HepG2 (cell line): ENCODE measurements at regions of chr22 and their contacts with region 1.

Region 1: DNA sequence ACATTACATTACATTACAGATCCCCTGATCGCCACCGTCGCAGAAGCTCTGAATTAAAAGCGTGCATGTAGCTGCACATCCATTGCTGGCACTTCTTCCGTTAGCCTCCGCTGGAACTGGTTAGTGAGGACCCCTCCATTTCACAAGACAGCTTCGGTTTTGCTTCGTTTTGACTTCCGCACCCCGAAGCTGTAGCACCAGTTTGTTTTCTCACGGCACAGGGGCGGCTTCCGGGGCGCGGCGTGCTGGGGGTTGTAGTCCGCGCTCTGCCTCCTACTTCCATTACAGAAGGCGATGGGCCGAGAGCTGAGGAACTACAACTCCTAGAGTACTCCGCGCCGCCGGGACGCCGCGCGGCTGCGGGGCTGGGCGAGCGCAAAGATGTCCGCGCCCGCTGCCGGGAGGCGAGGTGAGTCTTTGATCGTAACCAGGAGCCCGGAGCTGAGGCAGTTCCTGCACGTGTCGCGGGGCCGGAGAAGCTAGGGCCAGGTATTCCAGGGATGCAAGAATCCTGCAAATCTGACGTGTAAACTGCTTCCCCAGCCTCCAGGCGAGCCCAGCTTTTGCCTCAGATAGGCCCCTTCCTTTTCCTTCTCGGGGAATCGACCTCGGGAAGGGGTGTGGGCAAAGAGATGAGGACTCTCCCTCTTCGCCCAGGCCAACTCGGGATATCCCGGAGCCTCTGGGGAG is at the start of gene PEX26:
- DNase-seq: peak; percentile 92
- ATAC-seq: peak; percentile 98
- H3K4me3 ChIP-seq: peak within 1 kb of the TSS; percentile 78 to 94 (median 80)
- H3K27ac ChIP-seq: peak within 1 kb of the TSS; percentile 72
- H3K4me1 ChIP-seq: peaks cover 32% of the 10 kb centered on the region
- H3K27me3 ChIP-seq: no peaks in the 10 kb centered on the region; a peak in 1 of 5 replicates
- CTCF ChIP-seq: no peak
- EP300 ChIP-seq: no peak
- POLR2A ChIP-seq: peak; percentile 62 to 73
- RAD21 ChIP-seq: no peak
- total RNA-seq, gene PEX26: 25.1 and 30.6 TPM in 2 replicates

Region 2: GRCh38 chr22:17830043-17830961 is 247.5 kb before region 1 on chr22:
- CTCF ChIA-PET with region 1: interaction called, 43 read pairs
- POLR2A ChIA-PET with region 1: no interaction called
- in situ Hi-C with region 1: loop called (anchors 5 kb)
- intact Hi-C with region 1: loop called (anchors 1 kb)
- DNase-seq: peak; percentile 63
- ATAC-seq: peak; percentile 93
- H3K4me3 ChIP-seq: no peak overlapping the region
- H3K27ac ChIP-seq: no peak overlapping the region
- H3K4me1 ChIP-seq: no peaks in the 10 kb centered on the region
- H3K27me3 ChIP-seq: no peaks in the 10 kb centered on the region
- CTCF ChIP-seq: peak; percentile 98
- EP300 ChIP-seq: no peak
- POLR2A ChIP-seq: no peak
- RAD21 ChIP-seq: peak; percentile 94

Region 3: DNA sequence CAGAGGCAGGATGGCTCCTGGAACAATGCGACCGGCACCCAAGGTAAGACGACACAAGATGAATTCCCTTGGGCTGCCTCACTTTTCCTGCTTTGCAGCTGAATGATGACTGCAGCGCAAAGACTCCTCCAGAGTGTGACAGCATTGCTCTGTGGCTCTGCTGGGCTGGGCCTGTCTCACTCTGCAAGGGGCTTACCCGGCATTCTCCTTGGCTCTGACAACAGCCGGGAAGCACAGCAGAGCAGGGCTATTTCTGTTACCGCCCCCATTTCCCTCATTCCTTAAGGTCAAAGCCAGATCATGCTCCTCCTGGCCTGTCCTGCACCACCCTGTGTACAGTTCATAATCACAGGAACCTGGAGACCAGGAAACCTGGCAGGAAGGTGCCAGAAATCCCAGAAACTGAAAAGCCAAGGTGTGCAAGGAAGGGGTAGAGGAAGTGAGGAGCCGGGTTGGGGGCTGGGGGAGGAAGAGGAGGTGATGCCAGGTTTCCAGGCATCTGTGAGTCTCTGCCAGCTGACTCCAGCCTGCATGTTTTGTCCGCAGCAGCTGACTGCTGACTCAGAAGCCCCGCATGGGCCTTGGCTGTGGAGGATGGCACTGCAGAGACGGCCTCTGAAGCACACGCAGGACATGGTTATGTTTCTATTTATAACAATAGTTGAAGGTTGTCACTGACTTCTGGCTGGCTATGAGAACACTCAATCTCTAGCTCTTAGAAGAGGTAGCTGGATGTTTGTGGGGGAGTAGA is 167.0 kb before region 1 on chr22:
- CTCF ChIA-PET with region 1: no interaction called
- POLR2A ChIA-PET with region 1: no interaction called
- in situ Hi-C with region 1: loop called (anchors 10 kb)
- intact Hi-C with region 1: no loop called
- DNase-seq: no peak
- ATAC-seq: peak; percentile 72
- H3K4me3 ChIP-seq: no peak overlapping the region
- H3K27ac ChIP-seq: no peak overlapping the region
- H3K4me1 ChIP-seq: peaks cover 7% of the 10 kb centered on the region; the same call in 1 of the 2 replicates
- H3K27me3 ChIP-seq: no peaks in the 10 kb centered on the region
- CTCF ChIP-seq: peak; percentile 61
- EP300 ChIP-seq: no peak
- POLR2A ChIP-seq: no peak
- RAD21 ChIP-seq: no peak

Region 4: GRCh38 chr22:18024276-18024947 is 53.4 kb before region 1 on chr22 and contains the start of gene MICAL3:
- CTCF ChIA-PET with region 1: interaction called, 3 read pairs
- POLR2A ChIA-PET with region 1: interaction called, 4 read pairs
- in situ Hi-C with region 1: no loop called
- intact Hi-C with region 1: loop called (anchors 1 kb)
- DNase-seq: no peak
- ATAC-seq: peak; percentile 92
- H3K4me3 ChIP-seq: peak within 1 kb of the TSS; percentile 58 to 79 (median 64)
- H3K27ac ChIP-seq: no peak within 1 kb of the TSS
- H3K4me1 ChIP-seq: peaks cover 25% of the 10 kb centered on the region
- H3K27me3 ChIP-seq: peaks cover 0 to 20% of the 10 kb centered on the region in 2 experiments; a peak in 4 of 5 replicates
- CTCF ChIP-seq: peak; percentile 61
- EP300 ChIP-seq: no peak
- POLR2A ChIP-seq: no peak
- RAD21 ChIP-seq: peak; percentile 84
- total RNA-seq, gene MICAL3: 9.5 and 12.5 TPM in 2 replicates

Region 5: GRCh38 chr22:18044548-18045271 is 33.1 kb before region 1 on chr22:
- CTCF ChIA-PET with region 1: no interaction called
- POLR2A ChIA-PET with region 1: interaction called, 13 read pairs
- in situ Hi-C with region 1: no loop called
- intact Hi-C with region 1: no loop called
- DNase-seq: peak; percentile 94
- ATAC-seq: peak; percentile 97
- H3K4me3 ChIP-seq: peak overlapping the region; percentile 19 to 60 (median 20)
- H3K27ac ChIP-seq: peak overlapping the region; percentile 32
- H3K4me1 ChIP-seq: peaks cover 47% of the 10 kb centered on the region
- H3K27me3 ChIP-seq: no peaks in the 10 kb centered on the region
- CTCF ChIP-seq: peak; percentile 16; the same call in 1 of the 2 replicates
- EP300 ChIP-seq: peak; percentile 58 to 71; a peak in 3 of 4 replicates
- POLR2A ChIP-seq: no peak
- RAD21 ChIP-seq: no peak

Region 6: DNA sequence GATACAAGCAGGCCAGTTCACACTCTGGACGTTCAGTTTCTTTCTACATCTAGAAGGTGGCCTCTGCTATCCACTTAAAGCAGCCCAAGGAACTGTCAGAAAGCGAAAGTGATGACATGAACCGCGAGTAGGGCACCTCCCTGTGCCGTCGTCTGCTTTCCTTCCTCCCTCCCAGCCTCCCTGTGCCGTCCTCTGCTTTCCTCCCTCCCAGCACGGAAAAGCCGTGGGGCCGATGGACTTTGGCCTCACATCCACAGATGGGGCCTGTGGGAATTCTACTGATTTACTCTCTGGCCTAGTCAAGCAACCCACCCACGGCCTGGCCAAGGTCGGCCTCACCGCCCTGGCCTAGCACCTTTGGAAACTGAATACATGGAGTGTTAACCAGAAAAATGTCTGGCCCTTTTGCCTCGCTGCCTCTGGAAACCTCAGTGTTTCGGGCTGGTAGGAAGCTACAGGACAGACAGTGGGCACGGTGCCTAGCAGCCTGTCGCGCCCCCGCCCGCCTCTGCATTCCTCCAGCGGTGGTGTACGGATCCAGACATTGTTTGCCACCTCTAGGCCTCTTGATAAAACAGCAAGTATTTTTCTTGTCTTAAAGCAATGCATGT is 14.2 kb after region 1 on chr22:
- CTCF ChIA-PET with region 1: no interaction called
- POLR2A ChIA-PET with region 1: interaction called, 33 read pairs
- in situ Hi-C with region 1: no loop called
- intact Hi-C with region 1: no loop called
- DNase-seq: peak; percentile 76
- ATAC-seq: peak; percentile 90
- H3K4me3 ChIP-seq: peak overlapping the region; percentile 44 to 65 (median 56)
- H3K27ac ChIP-seq: peak overlapping the region; percentile 92
- H3K4me1 ChIP-seq: peaks cover 36% of the 10 kb centered on the region
- H3K27me3 ChIP-seq: no peaks in the 10 kb centered on the region
- CTCF ChIP-seq: peak; percentile 43
- EP300 ChIP-seq: peak in 1 of 2 experiments; percentile 43; a peak in 1 of 4 replicates
- POLR2A ChIP-seq: peak in 1 of 2 experiments; percentile 66; a peak in 2 of 4 replicates
- RAD21 ChIP-seq: 0 out of 2 replicates have a peak, but pooled peaks have one; percentile 22